Esophagus squamous epithelium (tissue), 5 donors: ENCODE measurements at regions of chr14 and their contacts with region 1.

Region 1: GRCh38 chr14:21557084-21557901 is 22.6 kb downstream of the OR10G3 start:
- DNase-seq: peak; percentile 20
- H3K4me3 ChIP-seq: peak overlapping the region; percentile 12 to 58 (median 39)
- H3K27ac ChIP-seq: peak overlapping the region; percentile 2 to 71 (median 68)
- H3K4me1 ChIP-seq: peaks cover 0 to 18% (median 3%) of the 10 kb centered on the region in 3 donors
- H3K27me3 ChIP-seq: no peaks in the 10 kb centered on the region
- CTCF ChIP-seq: peak; percentile 49 to 74 (median 64)
- POLR2A ChIP-seq: no peak

Region 2: GRCh38 chr14:21369949-21370679 is 187.2 kb before region 1 on chr14:
- intact Hi-C with region 1: no loop called
- DNase-seq: no peak
- H3K4me3 ChIP-seq: no peak overlapping the region
- H3K27ac ChIP-seq: no peak overlapping the region
- H3K4me1 ChIP-seq: no peaks in the 10 kb centered on the region
- H3K27me3 ChIP-seq: no peaks in the 10 kb centered on the region
- CTCF ChIP-seq: no peak
- POLR2A ChIP-seq: no peak

Region 3: GRCh38 chr14:21498553-21499526 is 58.5 kb before region 1 on chr14:
- intact Hi-C with region 1: loop called (anchors 10 kb)
- DNase-seq: no peak
- H3K4me3 ChIP-seq: no peak overlapping the region
- H3K27ac ChIP-seq: no peak overlapping the region
- H3K4me1 ChIP-seq: peaks cover 0 to 4% (median 0%) of the 10 kb centered on the region in 3 donors
- H3K27me3 ChIP-seq: no peaks in the 10 kb centered on the region
- CTCF ChIP-seq: peak; percentile 22 to 61 (median 38)
- POLR2A ChIP-seq: no peak